Esophagus squamous epithelium (tissue), 5 donors: ENCODE measurements at regions of chr11 and their contacts with region 1.

Region 1: GRCh38 chr11:75532200-75533048 is 6.7 kb upstream of the GDPD5 start:
- DNase-seq: no peak
- H3K4me3 ChIP-seq: no peak overlapping the region
- H3K27ac ChIP-seq: no peak overlapping the region
- H3K4me1 ChIP-seq: peaks cover 0 to 4% (median 0%) of the 10 kb centered on the region in 3 donors
- H3K27me3 ChIP-seq: peaks cover 0 to 29% (median 0%) of the 10 kb centered on the region in 4 donors
- CTCF ChIP-seq: peak; percentile 78 to 94 (median 92)
- POLR2A ChIP-seq: no peak

Region 2: GRCh38 chr11:75270896-75271418 is 261.5 kb before region 1 on chr11:
- intact Hi-C with region 1: loop called (anchors 10 kb)
- DNase-seq: no peak
- H3K4me3 ChIP-seq: no peak overlapping the region
- H3K27ac ChIP-seq: no peak overlapping the region
- H3K4me1 ChIP-seq: peaks cover 0 to 8% (median 0%) of the 10 kb centered on the region in 3 donors
- H3K27me3 ChIP-seq: no peaks in the 10 kb centered on the region
- CTCF ChIP-seq: peak in 3 of 6 experiments; percentile 17 to 24 (median 17)
- POLR2A ChIP-seq: no peak

Region 3: DNA sequence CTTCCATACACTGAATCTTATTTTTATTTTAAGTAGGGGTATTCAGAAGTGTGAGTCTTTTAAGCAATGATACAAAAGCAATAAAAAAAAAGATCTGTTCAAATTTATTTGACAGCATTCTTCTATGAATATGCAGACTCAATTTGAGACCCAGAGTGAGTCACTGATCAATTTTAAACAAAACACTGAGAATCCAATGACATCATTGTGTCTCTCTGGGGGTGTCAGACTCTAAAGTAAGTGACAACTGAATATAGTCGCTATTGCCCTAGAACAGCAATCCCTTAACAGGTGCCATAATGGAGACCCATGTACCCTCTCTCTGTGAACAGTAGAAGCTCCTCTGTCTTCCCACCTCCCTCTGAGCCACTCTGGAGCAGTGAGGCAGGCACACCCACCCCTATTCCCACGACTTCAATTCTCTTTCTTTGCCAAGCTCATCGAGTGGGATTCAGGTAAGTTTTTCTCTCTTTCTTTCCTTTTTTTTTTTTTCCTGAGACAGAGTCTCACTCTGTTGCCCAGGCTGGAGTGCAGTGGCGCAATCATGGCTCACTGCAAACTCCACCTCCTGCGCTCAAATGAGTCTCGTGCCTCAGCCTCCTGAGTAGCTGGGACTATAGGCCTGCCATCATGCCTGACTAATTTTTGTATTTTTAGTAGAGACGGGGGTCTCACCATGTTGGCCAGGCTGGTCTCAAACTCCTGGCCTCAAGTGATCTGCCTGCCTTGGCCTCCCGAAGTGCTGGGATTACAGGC is 138.2 kb before region 1 on chr11:
- intact Hi-C with region 1: loop called (anchors 5 kb)
- DNase-seq: no peak
- H3K4me3 ChIP-seq: no peak overlapping the region
- H3K27ac ChIP-seq: no peak overlapping the region
- H3K4me1 ChIP-seq: peaks cover 0 to 1% (median 0%) of the 10 kb centered on the region in 3 donors
- H3K27me3 ChIP-seq: peaks cover 0 to 12% (median 0%) of the 10 kb centered on the region in 4 donors
- CTCF ChIP-seq: no peak
- POLR2A ChIP-seq: no peak

Region 4: GRCh38 chr11:75445315-75445953 is 87.0 kb before region 1 on chr11:
- intact Hi-C with region 1: loop called (anchors 2 kb)
- DNase-seq: peak; percentile 11
- H3K4me3 ChIP-seq: no peak overlapping the region
- H3K27ac ChIP-seq: no peak overlapping the region
- H3K4me1 ChIP-seq: peaks cover 0 to 19% (median 0%) of the 10 kb centered on the region in 3 donors
- H3K27me3 ChIP-seq: peaks cover 0 to 36% (median 0%) of the 10 kb centered on the region in 4 donors
- CTCF ChIP-seq: peak; percentile 91 to 94 (median 94)
- POLR2A ChIP-seq: no peak